ENCODE measurements at regions of chrX and their contacts with region 1.

Region 1: GRCh38 chrX:22095286-22095685 is 63.2 kb downstream of the PHEX start:
- H3K4me3 ChIP-seq: no peak overlapping the region
- H3K27ac ChIP-seq: no peak overlapping the region; the same call in 1 of the 2 replicates
- H3K4me1 ChIP-seq: peaks cover 4% of the 10 kb centered on the region; the same call in 1 of the 2 replicates
- CTCF ChIP-seq: no peak

Region 2: DNA sequence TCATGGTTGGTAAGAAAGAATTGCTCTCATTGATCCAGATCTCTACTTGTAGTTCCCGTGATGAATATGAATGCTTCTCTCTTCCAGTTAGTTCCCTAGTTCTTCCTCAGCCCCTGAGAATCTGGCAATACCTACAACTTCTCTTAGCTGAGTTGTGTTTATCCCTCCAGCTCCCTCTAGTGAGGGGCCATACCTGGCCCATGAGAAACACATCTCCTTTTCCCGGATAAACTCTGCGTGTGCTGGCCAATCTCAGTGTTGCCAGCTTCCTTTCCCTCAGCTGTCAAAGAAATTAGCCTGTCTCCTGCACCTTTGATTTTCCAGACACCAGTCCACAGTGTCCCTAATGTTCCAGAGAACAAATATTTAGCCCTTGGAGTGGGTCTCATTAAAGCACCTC is 183.1 kb after region 1 on chrX:
- CTCF ChIA-PET with region 1: no interaction called
- POLR2A ChIA-PET with region 1: interaction called, 10 read pairs
- H3K4me3 ChIP-seq: no peak overlapping the region
- H3K27ac ChIP-seq: no peak overlapping the region
- H3K4me1 ChIP-seq: no peaks in the 10 kb centered on the region
- CTCF ChIP-seq: no peak

Region 3: GRCh38 chrX:22338740-22339139 is 243.5 kb after region 1 on chrX:
- CTCF ChIA-PET with region 1: no interaction called
- POLR2A ChIA-PET with region 1: no interaction called
- H3K4me3 ChIP-seq: no peak overlapping the region
- H3K27ac ChIP-seq: no peak overlapping the region
- H3K4me1 ChIP-seq: peaks cover 5% of the 10 kb centered on the region; the same call in 1 of the 2 replicates
- CTCF ChIP-seq: no peak

Measured in HEK293 (cell line).